ENCODE measurements at regions of chr11 and their contacts with region 1.

Region 1: DNA sequence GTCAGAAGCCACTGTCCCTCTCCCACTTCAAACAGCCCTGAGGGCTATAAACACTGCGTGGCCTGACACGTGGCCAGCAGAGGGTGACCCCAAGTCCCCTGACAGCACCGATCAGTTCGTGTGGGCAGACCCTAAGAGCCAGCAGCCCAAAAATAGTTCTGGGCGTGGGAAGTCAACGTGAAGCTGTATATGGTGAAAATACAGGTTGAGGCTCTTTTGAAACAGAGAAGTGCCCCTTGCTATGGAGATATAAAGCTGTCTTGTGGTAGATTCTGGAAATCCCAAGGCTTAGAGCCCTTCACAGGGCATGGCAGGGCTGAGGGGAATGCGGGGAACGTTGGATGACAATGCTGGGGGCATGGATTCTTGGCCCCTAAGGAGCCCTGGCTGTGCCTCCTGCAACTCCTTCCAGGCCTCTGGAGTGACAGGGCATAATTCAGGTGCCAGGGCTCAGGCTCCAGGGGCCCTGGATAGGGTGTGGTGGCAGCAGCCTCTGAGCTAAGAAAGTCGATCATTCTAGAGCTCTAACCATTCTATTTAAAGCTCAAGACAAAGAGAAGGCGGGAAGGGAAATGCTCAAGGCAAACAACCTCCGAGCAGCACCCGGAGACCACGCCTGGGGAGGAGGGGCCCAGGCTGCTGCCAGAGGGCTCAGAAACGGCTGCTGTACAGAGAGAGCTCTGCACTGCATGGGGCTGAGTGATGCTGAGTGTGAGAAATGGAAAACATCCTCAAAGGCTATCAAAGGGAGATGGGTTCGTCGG is 60.4 kb upstream of the CD5 start:
- DNase-seq: no peak
- ATAC-seq: peak; percentile 91
- H3K4me3 Mint-ChIP-seq: peak overlapping the region; percentile 75
- H3K27ac Mint-ChIP-seq: peak overlapping the region; percentile 78
- H3K4me1 Mint-ChIP-seq: peaks cover 32% of the 10 kb centered on the region
- H3K27me3 Mint-ChIP-seq: no peaks in the 10 kb centered on the region
- CTCF ChIP-seq: no peak

Region 2: GRCh38 chr11:61053191-61053590 is 11.3 kb after region 1 on chr11:
- CTCF ChIA-PET with region 1: interaction called, 3 read pairs
- POLR2A ChIA-PET with region 1: interaction called, 4 read pairs
- intact Hi-C with region 1: loop called (anchors 1 kb)
- DNase-seq: no peak
- ATAC-seq: no peak
- H3K4me3 Mint-ChIP-seq: no peak overlapping the region
- H3K27ac Mint-ChIP-seq: no peak overlapping the region
- H3K4me1 Mint-ChIP-seq: peaks cover 3% of the 10 kb centered on the region
- H3K27me3 Mint-ChIP-seq: no peaks in the 10 kb centered on the region
- CTCF ChIP-seq: no peak

Region 3: GRCh38 chr11:61315260-61315659 is 273.3 kb after region 1 on chr11:
- CTCF ChIA-PET with region 1: no interaction called
- POLR2A ChIA-PET with region 1: no interaction called
- intact Hi-C with region 1: no loop called
- DNase-seq: no peak
- ATAC-seq: no peak
- H3K4me3 Mint-ChIP-seq: no peak overlapping the region
- H3K27ac Mint-ChIP-seq: no peak overlapping the region
- H3K4me1 Mint-ChIP-seq: no peaks in the 10 kb centered on the region
- H3K27me3 Mint-ChIP-seq: no peaks in the 10 kb centered on the region
- CTCF ChIP-seq: no peak

Measured in activated B cell treated with CpG ODN at 0.5 μM for 24 hours (primary cell).